A673 (cell line): ENCODE measurements at regions of chr12 and their contacts with region 1.

Region 1: GRCh38 chr12:64890873-64891468 is 66.5 kb downstream of the TBC1D30 start:
- DNase-seq: peak; percentile 73
- H3K4me3 ChIP-seq: no peak overlapping the region
- H3K27ac ChIP-seq: no peak overlapping the region
- H3K4me1 ChIP-seq: no peaks in the 10 kb centered on the region
- H3K27me3 ChIP-seq: peaks cover 5% of the 10 kb centered on the region
- CTCF ChIP-seq: peak; percentile 68

Region 2: GRCh38 chr12:65106948-65107347 is 216.0 kb after region 1 on chr12:
- CTCF ChIA-PET with region 1: no interaction called
- POLR2A ChIA-PET with region 1: no interaction called
- intact Hi-C with region 1: loop called (anchors 5 kb)
- DNase-seq: no peak
- H3K4me3 ChIP-seq: no peak overlapping the region
- H3K27ac ChIP-seq: no peak overlapping the region
- H3K4me1 ChIP-seq: no peaks in the 10 kb centered on the region
- H3K27me3 ChIP-seq: peaks cover 8% of the 10 kb centered on the region
- CTCF ChIP-seq: peak; percentile 54; the same call in 1 of the 2 replicates

Region 3: GRCh38 chr12:65121049-65121955 is 230.3 kb after region 1 on chr12 and contains the start of gene WIF1:
- CTCF ChIA-PET with region 1: no interaction called
- POLR2A ChIA-PET with region 1: no interaction called
- intact Hi-C with region 1: loop called (anchors 5 kb)
- DNase-seq: peak; percentile 60
- H3K4me3 ChIP-seq: peak within 1 kb of the TSS; percentile 40
- H3K27ac ChIP-seq: no peak within 1 kb of the TSS
- H3K4me1 ChIP-seq: peaks cover 8% of the 10 kb centered on the region
- H3K27me3 ChIP-seq: peaks cover 84% of the 10 kb centered on the region
- CTCF ChIP-seq: peak; percentile 65
- total RNA-seq, gene WIF1: not detected in 2 replicates

Region 4: GRCh38 chr12:65232476-65233077 is 341.6 kb after region 1 on chr12:
- CTCF ChIA-PET with region 1: interaction called, 7 read pairs
- POLR2A ChIA-PET with region 1: no interaction called
- intact Hi-C with region 1: loop called (anchors 5 kb)
- DNase-seq: peak; percentile 52
- H3K4me3 ChIP-seq: no peak overlapping the region
- H3K27ac ChIP-seq: no peak overlapping the region
- H3K4me1 ChIP-seq: no peaks in the 10 kb centered on the region
- H3K27me3 ChIP-seq: no peaks in the 10 kb centered on the region
- CTCF ChIP-seq: peak; percentile 65; the same call in 1 of the 2 replicates

Region 5: GRCh38 chr12:65279369-65280112 is 388.6 kb after region 1 on chr12:
- CTCF ChIA-PET with region 1: no interaction called
- POLR2A ChIA-PET with region 1: no interaction called
- intact Hi-C with region 1: loop called (anchors 10 kb)
- DNase-seq: peak; percentile 30
- H3K4me3 ChIP-seq: peak overlapping the region; percentile 68
- H3K27ac ChIP-seq: no peak overlapping the region
- H3K4me1 ChIP-seq: no peaks in the 10 kb centered on the region
- H3K27me3 ChIP-seq: no peaks in the 10 kb centered on the region
- CTCF ChIP-seq: no peak

Region 6: GRCh38 chr12:66409195-66409871 is 1518.4 kb after region 1 on chr12:
- CTCF ChIA-PET with region 1: no interaction called
- POLR2A ChIA-PET with region 1: no interaction called
- intact Hi-C with region 1: loop called (anchors 5 kb)
- DNase-seq: peak; percentile 77
- H3K4me3 ChIP-seq: no peak overlapping the region
- H3K27ac ChIP-seq: no peak overlapping the region
- H3K4me1 ChIP-seq: no peaks in the 10 kb centered on the region
- H3K27me3 ChIP-seq: peaks cover 6% of the 10 kb centered on the region
- CTCF ChIP-seq: peak; percentile 77

Region 7: GRCh38 chr12:66693901-66694675 is 1803.1 kb after region 1 on chr12:
- CTCF ChIA-PET with region 1: no interaction called
- POLR2A ChIA-PET with region 1: no interaction called
- intact Hi-C with region 1: loop called (anchors 10 kb)
- DNase-seq: peak; percentile 75
- H3K4me3 ChIP-seq: no peak overlapping the region
- H3K27ac ChIP-seq: no peak overlapping the region
- H3K4me1 ChIP-seq: no peaks in the 10 kb centered on the region
- H3K27me3 ChIP-seq: peaks cover 20% of the 10 kb centered on the region
- CTCF ChIP-seq: peak; percentile 70